ENCODE measurements at regions of chrX and their contacts with region 1.

Region 1: GRCh38 chrX:9341291-9342201 is 123.3 kb upstream of the TBL1X start:
- DNase-seq: no peak
- ATAC-seq: peak; percentile 45; the same call in 2 of the 3 replicates
- H3K4me3 ChIP-seq: peak overlapping the region in 2 of 3 experiments; percentile 28 to 33; a peak in 4 of 6 replicates
- H3K27ac ChIP-seq: no peak overlapping the region
- H3K4me1 ChIP-seq: peaks cover 20% of the 10 kb centered on the region
- H3K27me3 ChIP-seq: no peaks in the 10 kb centered on the region
- CTCF ChIP-seq: no peak
- EP300 ChIP-seq: no peak
- POLR2A ChIP-seq: no peak
- RAD21 ChIP-seq: no peak

Region 2: DNA sequence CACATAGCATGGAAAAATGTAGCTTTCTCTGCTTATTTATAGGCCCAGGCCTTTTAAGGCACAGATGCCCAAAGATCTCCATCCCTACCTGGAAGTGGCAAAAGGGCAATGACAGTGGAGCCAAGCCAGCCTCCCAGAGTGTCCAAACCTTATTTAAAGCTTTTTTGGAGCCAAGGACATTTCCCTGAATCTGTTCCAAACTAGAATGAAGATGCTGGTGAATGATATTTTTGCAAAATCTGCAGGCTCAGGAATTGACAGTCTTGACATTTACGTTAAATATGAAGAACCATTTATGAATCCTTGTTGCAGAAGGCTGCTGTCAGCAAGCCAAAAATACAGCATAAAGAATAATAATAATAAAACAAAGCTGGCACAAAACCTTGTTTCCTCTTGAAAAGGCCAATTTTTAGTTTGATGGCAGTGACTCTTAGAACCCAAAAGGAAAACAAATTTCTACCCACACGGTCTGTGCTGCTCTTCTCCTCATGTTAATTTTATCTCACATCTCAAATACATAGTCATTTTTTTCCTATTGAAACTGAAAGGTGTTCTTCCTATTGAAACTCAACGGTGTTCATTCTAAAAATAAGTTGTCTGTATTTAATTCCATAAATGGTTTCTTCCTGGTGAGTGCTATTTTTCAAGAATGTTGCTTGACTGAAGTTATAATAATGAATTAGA is 83.0 kb before region 1 on chrX:
- CTCF ChIA-PET with region 1: no interaction called
- POLR2A ChIA-PET with region 1: no interaction called
- in situ Hi-C with region 1: no loop called
- intact Hi-C with region 1: no loop called
- DNase-seq: no peak
- ATAC-seq: no peak
- H3K4me3 ChIP-seq: no peak overlapping the region
- H3K27ac ChIP-seq: no peak overlapping the region
- H3K4me1 ChIP-seq: no peaks in the 10 kb centered on the region
- H3K27me3 ChIP-seq: no peaks in the 10 kb centered on the region
- CTCF ChIP-seq: no peak
- EP300 ChIP-seq: no peak
- POLR2A ChIP-seq: no peak
- RAD21 ChIP-seq: no peak

Region 3: GRCh38 chrX:9456250-9457074 is 114.9 kb after region 1 on chrX:
- CTCF ChIA-PET with region 1: no interaction called
- POLR2A ChIA-PET with region 1: no interaction called
- in situ Hi-C with region 1: loop called (anchors 10 kb)
- intact Hi-C with region 1: no loop called
- DNase-seq: peak; percentile 32
- ATAC-seq: peak; percentile 49
- H3K4me3 ChIP-seq: no peak overlapping the region
- H3K27ac ChIP-seq: no peak overlapping the region
- H3K4me1 ChIP-seq: peaks cover 41% of the 10 kb centered on the region
- H3K27me3 ChIP-seq: no peaks in the 10 kb centered on the region
- CTCF ChIP-seq: no peak
- EP300 ChIP-seq: no peak
- POLR2A ChIP-seq: no peak
- RAD21 ChIP-seq: no peak

Measured in HepG2 (cell line).